Left ventricle myocardium superior (tissue), 1 donor: ENCODE measurements at regions of chr1 and their contacts with region 1.

Region 1: DNA sequence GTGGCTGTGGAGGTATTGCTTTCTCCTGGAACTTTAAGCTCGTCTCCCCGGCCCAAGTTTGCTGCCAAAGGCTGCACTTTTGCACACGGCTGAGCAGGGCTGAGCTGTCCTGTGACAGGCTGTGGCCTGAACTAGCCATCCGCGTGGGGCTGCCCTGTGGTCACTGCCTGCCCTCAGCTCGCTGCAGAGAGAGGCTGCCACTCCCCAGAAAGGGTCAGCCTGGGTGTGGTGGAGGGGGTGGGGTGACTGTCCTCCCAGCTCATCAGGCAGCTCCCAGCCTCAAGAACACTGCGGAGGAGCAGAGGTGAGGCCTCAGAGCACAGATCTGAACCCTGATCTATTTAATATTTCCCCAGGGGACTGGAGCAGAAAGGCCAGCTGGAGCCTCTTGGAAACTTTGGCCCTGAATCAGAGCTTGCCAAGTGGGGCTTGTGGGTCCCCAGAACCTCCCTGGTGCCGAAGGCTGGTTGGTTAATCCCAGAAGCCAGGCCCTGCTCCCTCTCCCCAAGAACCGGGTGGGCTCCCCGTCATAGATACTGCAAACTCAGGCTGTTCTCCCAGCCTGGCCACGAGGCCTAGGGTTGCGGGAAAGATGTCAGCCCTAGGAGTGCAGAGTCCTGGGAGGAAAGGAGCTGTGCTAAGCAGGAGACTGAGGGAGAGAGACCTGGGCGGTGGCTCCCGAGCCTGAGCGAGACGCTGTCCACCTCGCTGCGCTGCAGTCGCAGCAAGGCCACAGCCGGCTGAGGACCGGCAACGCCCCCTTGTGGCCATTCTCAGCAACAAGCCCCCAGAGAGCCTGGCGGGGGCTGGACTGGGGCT is 125.1 kb upstream of the IPO9 start:
- DNase-seq: peak; percentile 91
- ATAC-seq: peak; percentile 86

Region 2: DNA sequence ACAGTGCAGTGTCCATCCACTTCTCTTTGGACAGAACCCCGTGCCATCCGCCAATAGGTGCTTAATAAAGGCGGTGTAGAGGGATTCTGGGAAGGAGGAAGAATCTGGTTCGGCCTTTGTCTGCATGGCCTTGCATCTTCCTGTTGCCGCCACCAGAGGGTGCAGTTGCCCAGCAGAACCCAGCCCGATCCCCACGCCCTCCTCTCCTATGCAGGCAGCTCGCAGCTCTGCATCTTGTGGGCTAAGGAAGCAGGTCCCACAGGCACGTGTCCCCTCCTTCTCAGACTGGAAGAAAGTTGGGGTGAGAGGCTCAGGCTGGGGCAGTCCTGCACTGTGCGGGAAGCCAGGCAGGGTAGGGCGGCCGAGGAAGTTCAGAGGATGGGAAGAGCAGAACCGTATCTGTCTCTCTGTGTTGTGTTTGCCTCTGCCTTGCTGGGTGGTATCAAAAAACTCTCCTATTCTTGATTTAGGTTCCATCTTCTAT is 144.1 kb before region 1 on chr1:
- intact Hi-C with region 1: loop called (anchors 2 kb)
- DNase-seq: peak; percentile 87
- ATAC-seq: peak; percentile 82